Activated CD4-positive, alpha-beta memory T cell treated with anti-CD3 and anti-CD28 coated beads, Interleukin-2, amount 10 ng/mL, durations not matched to agents 7 days and 5 days (primary cell): ENCODE measurements at regions of chr6 and their contacts with region 1.

Region 1: GRCh38 chr6:158026054-158026900 is 44.6 kb downstream of the SYNJ2 start:
- DNase-seq: peak; percentile 85
- H3K4me3 Mint-ChIP-seq: peak overlapping the region; percentile 70
- H3K27ac Mint-ChIP-seq: peak overlapping the region; percentile 98
- H3K4me1 Mint-ChIP-seq: peaks cover 48% of the 10 kb centered on the region
- H3K27me3 Mint-ChIP-seq: no peaks in the 10 kb centered on the region

Region 2: GRCh38 chr6:157981395-157982296 is 44.6 kb before region 1 on chr6 and contains the start of gene SYNJ2:
- CTCF ChIA-PET with region 1: interaction called, 67 read pairs
- POLR2A ChIA-PET with region 1: interaction called, 33 read pairs
- DNase-seq: peak; percentile 90
- H3K4me3 Mint-ChIP-seq: peak within 1 kb of the TSS; percentile 96
- H3K27ac Mint-ChIP-seq: peak within 1 kb of the TSS; percentile 80
- H3K4me1 Mint-ChIP-seq: peaks cover 57% of the 10 kb centered on the region
- H3K27me3 Mint-ChIP-seq: peaks cover 8% of the 10 kb centered on the region
- total RNA-seq, gene SYNJ2: 36.8 to 39.1 TPM

Region 3: GRCh38 chr6:158009114-158009891 is 17.0 kb before region 1 on chr6:
- CTCF ChIA-PET with region 1: interaction called, 24 read pairs
- POLR2A ChIA-PET with region 1: interaction called, 5 read pairs
- DNase-seq: peak; percentile 30
- H3K4me3 Mint-ChIP-seq: peak overlapping the region; percentile 37
- H3K27ac Mint-ChIP-seq: peak overlapping the region; percentile 87
- H3K4me1 Mint-ChIP-seq: peaks cover 75% of the 10 kb centered on the region
- H3K27me3 Mint-ChIP-seq: no peaks in the 10 kb centered on the region

Region 4: GRCh38 chr6:158040051-158040803 is 13.9 kb after region 1 on chr6:
- CTCF ChIA-PET with region 1: interaction called, 18 read pairs
- POLR2A ChIA-PET with region 1: interaction called, 15 read pairs
- DNase-seq: peak; percentile 53
- H3K4me3 Mint-ChIP-seq: no peak overlapping the region
- H3K27ac Mint-ChIP-seq: peak overlapping the region; percentile 79
- H3K4me1 Mint-ChIP-seq: peaks cover 39% of the 10 kb centered on the region
- H3K27me3 Mint-ChIP-seq: no peaks in the 10 kb centered on the region

Region 5: DNA sequence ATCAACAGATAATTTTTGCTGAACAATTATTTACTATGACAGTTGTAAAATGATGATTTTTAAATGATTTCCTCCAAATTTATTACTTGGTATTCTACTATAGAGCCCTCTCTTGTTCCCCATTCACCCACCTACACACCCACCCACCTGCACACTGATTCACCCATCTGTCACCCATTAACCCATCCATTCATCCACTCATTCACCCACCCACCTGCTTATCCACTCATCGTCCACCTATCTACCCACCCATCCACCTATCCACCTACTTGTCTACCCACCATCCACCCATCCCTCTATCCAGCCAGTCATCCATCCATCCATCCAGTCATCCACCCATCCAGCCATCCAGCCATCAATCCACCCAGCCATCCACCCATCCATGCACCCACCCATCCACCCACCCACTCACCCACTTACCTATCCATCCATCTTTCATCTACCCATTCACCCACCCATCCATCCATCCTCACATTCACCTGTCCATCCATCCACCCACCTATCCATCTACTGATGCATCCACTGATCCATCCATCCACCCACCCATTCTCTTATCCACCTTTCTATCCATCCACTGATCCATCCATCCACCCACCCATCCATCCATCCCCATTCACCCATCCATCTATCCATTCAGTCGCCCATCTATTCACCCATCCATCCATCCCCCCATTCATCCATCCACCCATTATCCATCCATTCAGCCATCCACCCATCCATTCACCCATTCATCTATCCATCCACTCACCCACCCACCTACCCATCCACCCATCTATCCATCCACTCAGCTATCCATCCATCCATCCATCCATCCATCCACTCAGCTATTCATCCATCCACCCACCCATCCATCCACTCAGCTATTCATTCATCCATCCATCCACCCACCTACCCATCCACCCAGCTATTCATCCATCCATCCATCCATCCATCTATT is 27.4 kb after region 1 on chr6:
- CTCF ChIA-PET with region 1: interaction called, 23 read pairs
- POLR2A ChIA-PET with region 1: interaction called, 4 read pairs
- DNase-seq: no peak
- H3K4me3 Mint-ChIP-seq: no peak overlapping the region
- H3K27ac Mint-ChIP-seq: no peak overlapping the region
- H3K4me1 Mint-ChIP-seq: peaks cover 26% of the 10 kb centered on the region
- H3K27me3 Mint-ChIP-seq: no peaks in the 10 kb centered on the region

Region 6: DNA sequence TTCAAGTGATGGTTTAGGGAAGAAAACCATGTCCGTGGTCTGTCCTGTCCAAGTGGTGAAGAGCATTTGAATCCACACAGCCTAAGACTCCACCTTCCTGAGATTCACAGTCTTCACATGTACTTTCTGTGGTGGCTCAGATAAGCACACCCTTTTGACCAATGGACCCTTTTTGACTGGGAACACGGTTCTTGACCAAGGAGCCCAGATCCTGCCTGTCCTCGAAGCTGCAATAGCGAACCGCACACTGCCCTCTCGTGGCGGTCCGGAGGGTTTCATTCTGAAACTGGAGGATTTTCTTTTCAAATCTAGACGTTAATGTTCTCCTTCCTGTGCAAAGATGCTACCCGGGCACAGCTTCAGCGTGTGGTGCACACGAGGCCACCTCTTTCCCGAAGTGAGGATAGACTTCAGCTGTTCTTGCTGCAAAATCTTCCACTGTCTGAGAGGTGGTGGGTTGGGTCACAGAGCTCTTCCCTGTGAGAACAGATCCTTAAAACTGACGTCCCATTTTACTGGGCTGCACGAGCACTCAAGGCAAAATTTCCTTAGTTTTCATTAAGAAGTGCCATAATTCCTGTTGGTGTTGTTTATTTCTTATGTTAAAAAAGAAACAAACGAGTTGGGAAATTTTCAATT is 45.9 kb after region 1 on chr6:
- CTCF ChIA-PET with region 1: interaction called, 32 read pairs
- POLR2A ChIA-PET with region 1: interaction called, 10 read pairs
- DNase-seq: peak; percentile 74
- H3K4me3 Mint-ChIP-seq: no peak overlapping the region
- H3K27ac Mint-ChIP-seq: no peak overlapping the region
- H3K4me1 Mint-ChIP-seq: peaks cover 46% of the 10 kb centered on the region
- H3K27me3 Mint-ChIP-seq: no peaks in the 10 kb centered on the region

Region 7: GRCh38 chr6:158475344-158476302 is 449.3 kb after region 1 on chr6:
- CTCF ChIA-PET with region 1: no interaction called
- POLR2A ChIA-PET with region 1: no interaction called
- DNase-seq: no peak
- H3K4me3 Mint-ChIP-seq: no peak overlapping the region
- H3K27ac Mint-ChIP-seq: no peak overlapping the region
- H3K4me1 Mint-ChIP-seq: no peaks in the 10 kb centered on the region
- H3K27me3 Mint-ChIP-seq: no peaks in the 10 kb centered on the region